ENCODE measurements at regions of chr17 and their contacts with region 1.

Region 1: DNA sequence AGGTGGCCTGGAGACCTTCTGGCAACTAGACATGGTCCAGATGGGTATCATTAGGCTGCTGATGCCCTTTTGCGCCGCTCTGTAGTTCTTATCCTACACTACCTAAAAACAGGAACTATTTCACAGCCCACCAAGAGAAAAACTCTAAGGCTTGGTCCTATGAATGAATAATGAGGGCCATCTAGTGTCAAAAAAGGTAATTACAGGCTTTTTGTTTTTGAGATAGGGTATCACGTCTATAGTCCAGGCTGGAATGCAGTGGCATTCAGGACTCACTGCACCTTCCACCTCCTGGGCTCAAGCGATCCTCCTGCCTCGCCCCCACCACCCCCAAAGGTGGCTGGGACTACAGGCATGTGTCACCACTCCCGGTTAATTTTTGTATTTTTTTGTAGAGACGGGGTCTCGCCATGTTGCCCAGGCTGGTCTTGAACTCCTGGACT is 20.9 kb downstream of the COIL start:
- DNase-seq: peak; percentile 42 to 71 (median 53)
- ATAC-seq: peak; percentile 93
- H3K4me3 ChIP-seq: no peak overlapping the region
- H3K27ac ChIP-seq: no peak overlapping the region
- H3K4me1 ChIP-seq: peaks cover 8% of the 10 kb centered on the region in 2 experiments; a peak in 3 of 5 replicates
- H3K27me3 ChIP-seq: no peaks in the 10 kb centered on the region
- CTCF ChIP-seq: peak; percentile 63 to 88 (median 72); a peak in 5 of 6 replicates
- EP300 ChIP-seq: no peak
- POLR2A ChIP-seq: no peak
- RAD21 ChIP-seq: peak; percentile 89 to 92

Region 2: DNA sequence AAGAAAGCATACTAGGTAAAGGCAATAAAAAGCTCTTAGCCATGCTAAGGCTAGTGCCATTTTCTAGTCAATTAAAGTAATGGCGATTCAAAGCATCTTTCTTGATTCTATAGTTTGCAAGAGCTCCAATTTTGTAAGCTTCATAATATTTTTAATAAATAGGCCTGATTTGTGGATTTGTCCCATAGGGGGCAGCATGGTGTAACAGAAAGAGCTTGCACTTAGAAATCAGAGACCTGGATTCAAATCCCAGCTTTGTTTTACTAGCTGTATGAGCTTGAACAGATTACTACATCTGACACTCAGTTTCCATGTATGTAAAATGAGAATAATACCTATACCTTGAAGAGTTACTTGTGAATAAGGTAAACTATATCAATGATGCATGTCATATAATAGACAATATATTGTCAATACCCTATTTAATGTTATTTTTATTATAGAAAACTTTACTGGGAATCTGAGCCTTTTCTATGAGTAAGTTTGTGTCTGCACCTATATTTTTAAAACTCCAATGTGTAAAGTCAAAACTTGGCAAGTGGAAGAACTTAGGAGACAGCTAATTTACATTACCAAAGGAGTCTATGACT is 440.0 kb before region 1 on chr17:
- CTCF ChIA-PET with region 1: no interaction called
- POLR2A ChIA-PET with region 1: no interaction called
- in situ Hi-C with region 1: no loop called
- intact Hi-C with region 1: loop called (anchors 10 kb)
- DNase-seq: peak; percentile 19 to 40 (median 22)
- ATAC-seq: no peak
- H3K4me3 ChIP-seq: no peak overlapping the region
- H3K27ac ChIP-seq: no peak overlapping the region
- H3K4me1 ChIP-seq: no peaks in the 10 kb centered on the region
- H3K27me3 ChIP-seq: no peaks in the 10 kb centered on the region
- CTCF ChIP-seq: peak; percentile 44 to 65 (median 55); a peak in 5 of 6 replicates
- EP300 ChIP-seq: no peak
- POLR2A ChIP-seq: no peak
- RAD21 ChIP-seq: peak; percentile 36 to 64; a peak in 3 of 4 replicates

Region 3: GRCh38 chr17:56592487-56593085 is 347.3 kb before region 1 on chr17:
- CTCF ChIA-PET with region 1: interaction called, 7 read pairs
- POLR2A ChIA-PET with region 1: no interaction called
- in situ Hi-C with region 1: no loop called
- intact Hi-C with region 1: loop called (anchors 10 kb)
- DNase-seq: peak; percentile 52 to 88 (median 82)
- ATAC-seq: peak; percentile 96
- H3K4me3 ChIP-seq: no peak overlapping the region
- H3K27ac ChIP-seq: no peak overlapping the region
- H3K4me1 ChIP-seq: peaks cover 0 to 22% of the 10 kb centered on the region in 2 experiments; a peak in 2 of 5 replicates
- H3K27me3 ChIP-seq: peaks cover 17 to 28% of the 10 kb centered on the region in 2 experiments
- CTCF ChIP-seq: peak; percentile 67 to 88 (median 76)
- EP300 ChIP-seq: no peak
- POLR2A ChIP-seq: no peak
- RAD21 ChIP-seq: peak; percentile 84 to 91

Region 4: GRCh38 chr17:56774650-56775049 is 165.3 kb before region 1 on chr17:
- CTCF ChIA-PET with region 1: no interaction called
- POLR2A ChIA-PET with region 1: no interaction called
- in situ Hi-C with region 1: no loop called
- intact Hi-C with region 1: no loop called
- DNase-seq: no peak
- ATAC-seq: no peak
- H3K4me3 ChIP-seq: no peak overlapping the region
- H3K27ac ChIP-seq: no peak overlapping the region
- H3K4me1 ChIP-seq: peaks cover 0 to 7% of the 10 kb centered on the region in 2 experiments; a peak in 2 of 5 replicates
- H3K27me3 ChIP-seq: peaks cover 10 to 21% of the 10 kb centered on the region in 2 experiments
- CTCF ChIP-seq: no peak
- EP300 ChIP-seq: no peak
- POLR2A ChIP-seq: no peak
- RAD21 ChIP-seq: no peak

Region 5: DNA sequence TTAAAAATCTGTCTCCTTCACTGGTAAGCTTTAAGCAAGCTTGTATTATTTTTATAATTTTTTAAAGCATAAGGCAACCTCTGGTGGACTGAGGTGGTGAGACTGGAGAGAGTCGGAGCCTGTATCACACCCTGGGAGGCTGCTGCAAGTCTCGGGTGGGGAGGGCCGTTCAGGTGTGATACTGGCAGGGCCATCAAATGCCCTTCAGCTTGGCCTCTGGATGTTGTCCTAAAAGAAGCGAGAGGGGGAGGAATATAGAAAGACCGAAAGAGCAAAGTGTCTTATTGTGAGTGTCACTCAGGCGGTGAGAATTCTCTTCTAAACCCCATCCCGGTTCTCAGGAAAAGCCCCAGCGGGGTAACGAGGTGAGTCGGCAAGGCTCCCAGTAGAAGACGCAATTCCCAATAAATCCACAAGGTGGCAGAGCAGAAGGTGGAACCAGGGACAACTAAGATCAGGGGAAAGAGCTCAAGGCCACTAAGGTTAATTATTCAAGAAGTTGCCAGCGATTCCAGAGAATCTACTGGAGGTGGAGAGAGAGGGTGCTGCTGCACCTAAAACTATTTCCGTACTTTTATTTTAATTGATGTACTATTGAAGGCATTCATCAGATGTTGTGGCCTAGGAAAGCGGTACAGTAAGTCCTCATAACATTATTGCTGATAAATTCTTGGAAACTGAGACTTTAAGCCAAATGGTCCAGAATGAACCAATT is 120.3 kb before region 1 on chr17:
- CTCF ChIA-PET with region 1: interaction called, 27 read pairs
- POLR2A ChIA-PET with region 1: interaction called, 4 read pairs
- in situ Hi-C with region 1: loop called (anchors 5 kb)
- intact Hi-C with region 1: loop called (anchors 1 kb)
- DNase-seq: peak; percentile 78 to 84 (median 80)
- ATAC-seq: peak; percentile 95
- H3K4me3 ChIP-seq: no peak overlapping the region
- H3K27ac ChIP-seq: no peak overlapping the region
- H3K4me1 ChIP-seq: no peaks in the 10 kb centered on the region; a peak in 1 of 5 replicates
- H3K27me3 ChIP-seq: peaks cover 3 to 4% of the 10 kb centered on the region in 2 experiments
- CTCF ChIP-seq: peak; percentile 74 to 81 (median 81)
- EP300 ChIP-seq: no peak
- POLR2A ChIP-seq: no peak
- RAD21 ChIP-seq: peak; percentile 74 to 83

Region 6: DNA sequence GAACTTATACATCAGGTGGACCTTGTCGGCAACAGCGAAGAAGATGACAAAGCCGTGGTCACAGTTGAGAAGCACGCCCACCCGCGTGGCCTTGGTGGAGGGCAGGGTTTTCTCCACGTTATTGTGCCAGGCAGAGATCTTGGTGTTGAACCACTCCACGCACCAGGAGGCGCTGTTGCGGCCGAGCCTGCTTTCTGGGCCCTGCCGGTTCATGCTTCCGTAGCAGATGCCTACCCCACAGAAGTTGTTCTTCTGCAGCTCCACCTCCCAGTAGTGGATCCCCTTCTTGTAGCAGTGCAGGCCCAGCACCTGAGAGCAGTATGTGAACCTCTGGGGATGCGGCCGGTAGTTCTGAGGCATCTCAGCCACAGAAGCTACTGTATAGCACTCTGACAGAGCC is 48.1 kb before region 1 on chr17:
- CTCF ChIA-PET with region 1: interaction called, 6 read pairs
- POLR2A ChIA-PET with region 1: interaction called, 3 read pairs
- in situ Hi-C with region 1: no loop called
- intact Hi-C with region 1: loop called (anchors 5 kb)
- DNase-seq: peak; percentile 34 to 49 (median 42)
- ATAC-seq: peak; percentile 73
- H3K4me3 ChIP-seq: no peak overlapping the region
- H3K27ac ChIP-seq: no peak overlapping the region
- H3K4me1 ChIP-seq: no peaks in the 10 kb centered on the region
- H3K27me3 ChIP-seq: no peaks in the 10 kb centered on the region
- CTCF ChIP-seq: peak; percentile 59 to 67 (median 63)
- EP300 ChIP-seq: no peak
- POLR2A ChIP-seq: no peak
- RAD21 ChIP-seq: peak in 1 of 2 experiments; percentile 38; a peak in 2 of 4 replicates

Region 7: DNA sequence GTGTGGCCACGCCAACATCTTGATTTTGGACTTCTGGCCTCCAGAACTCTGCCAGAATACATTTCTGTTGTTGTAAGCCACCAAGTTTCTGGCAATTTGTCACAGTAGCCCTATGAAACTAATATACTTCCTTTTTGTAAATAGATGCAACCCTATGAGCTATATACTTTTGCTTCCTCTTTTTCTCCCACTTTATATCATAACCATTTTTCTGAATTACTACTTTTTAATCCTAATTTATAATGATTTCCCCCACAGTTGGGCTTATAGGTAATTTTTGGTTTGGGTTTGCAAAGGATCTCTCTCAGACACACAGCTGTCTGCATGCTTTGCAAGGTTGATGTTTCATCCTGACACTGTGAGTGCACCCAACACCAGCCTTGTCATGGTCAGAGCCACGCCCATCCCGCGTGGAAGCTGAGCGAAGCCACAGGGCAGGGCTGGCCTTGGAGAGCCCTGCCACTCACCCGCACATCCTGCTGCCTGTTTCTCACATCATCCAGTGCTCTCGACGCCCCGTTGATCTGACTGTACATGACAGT is 31.9 kb before region 1 on chr17:
- CTCF ChIA-PET with region 1: interaction called, 4 read pairs
- POLR2A ChIA-PET with region 1: no interaction called
- in situ Hi-C with region 1: no loop called
- intact Hi-C with region 1: loop called (anchors 1 kb)
- DNase-seq: peak in 2 of 4 experiments; percentile 29 to 56
- ATAC-seq: no peak
- H3K4me3 ChIP-seq: no peak overlapping the region
- H3K27ac ChIP-seq: no peak overlapping the region
- H3K4me1 ChIP-seq: peaks cover 33 to 37% of the 10 kb centered on the region in 2 experiments
- H3K27me3 ChIP-seq: no peaks in the 10 kb centered on the region
- CTCF ChIP-seq: no peak
- EP300 ChIP-seq: no peak
- POLR2A ChIP-seq: no peak
- RAD21 ChIP-seq: no peak

Region 8: DNA sequence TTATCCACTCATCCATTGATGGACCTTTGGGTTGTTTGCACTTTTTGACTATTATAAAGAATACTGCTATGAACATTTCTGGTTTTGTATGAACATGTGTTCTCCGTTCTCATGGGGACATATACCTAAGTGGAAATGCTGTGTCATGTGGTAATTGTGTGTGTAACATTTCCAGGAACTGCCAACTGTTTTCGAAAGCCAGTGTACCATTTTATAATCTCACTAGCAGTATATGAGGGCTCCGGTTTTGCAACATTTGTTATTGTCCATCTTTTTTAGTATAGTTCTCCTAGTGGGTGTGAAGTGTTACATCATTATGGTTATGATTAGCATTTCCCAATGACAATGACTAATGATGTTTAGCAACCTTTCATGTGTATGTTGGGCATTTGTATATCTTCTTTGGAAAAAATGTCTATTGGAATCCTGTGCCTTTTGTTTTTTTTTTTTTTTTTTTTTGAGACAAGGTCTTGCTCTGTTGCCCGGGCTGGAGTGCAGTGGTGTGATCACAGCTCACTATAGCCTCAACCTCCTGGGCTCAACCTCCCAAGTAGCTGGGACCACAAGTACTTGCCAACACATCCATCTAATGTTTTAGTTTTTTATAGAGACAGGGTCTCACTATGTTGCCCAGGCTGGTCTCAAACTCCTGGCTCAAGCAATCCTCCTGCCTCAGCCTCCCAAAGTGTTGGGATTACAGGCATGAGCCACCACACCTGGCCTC is 20.8 kb before region 1 on chr17:
- CTCF ChIA-PET with region 1: no interaction called
- POLR2A ChIA-PET with region 1: no interaction called
- in situ Hi-C with region 1: no loop called
- intact Hi-C with region 1: no loop called
- DNase-seq: peak in 1 of 4 experiments; percentile 24
- ATAC-seq: no peak
- H3K4me3 ChIP-seq: no peak overlapping the region
- H3K27ac ChIP-seq: peak overlapping the region; percentile 27
- H3K4me1 ChIP-seq: peaks cover 13 to 18% of the 10 kb centered on the region in 2 experiments; a peak in 4 of 5 replicates
- H3K27me3 ChIP-seq: no peaks in the 10 kb centered on the region
- CTCF ChIP-seq: no peak
- EP300 ChIP-seq: no peak
- POLR2A ChIP-seq: no peak
- RAD21 ChIP-seq: no peak

Region 9: DNA sequence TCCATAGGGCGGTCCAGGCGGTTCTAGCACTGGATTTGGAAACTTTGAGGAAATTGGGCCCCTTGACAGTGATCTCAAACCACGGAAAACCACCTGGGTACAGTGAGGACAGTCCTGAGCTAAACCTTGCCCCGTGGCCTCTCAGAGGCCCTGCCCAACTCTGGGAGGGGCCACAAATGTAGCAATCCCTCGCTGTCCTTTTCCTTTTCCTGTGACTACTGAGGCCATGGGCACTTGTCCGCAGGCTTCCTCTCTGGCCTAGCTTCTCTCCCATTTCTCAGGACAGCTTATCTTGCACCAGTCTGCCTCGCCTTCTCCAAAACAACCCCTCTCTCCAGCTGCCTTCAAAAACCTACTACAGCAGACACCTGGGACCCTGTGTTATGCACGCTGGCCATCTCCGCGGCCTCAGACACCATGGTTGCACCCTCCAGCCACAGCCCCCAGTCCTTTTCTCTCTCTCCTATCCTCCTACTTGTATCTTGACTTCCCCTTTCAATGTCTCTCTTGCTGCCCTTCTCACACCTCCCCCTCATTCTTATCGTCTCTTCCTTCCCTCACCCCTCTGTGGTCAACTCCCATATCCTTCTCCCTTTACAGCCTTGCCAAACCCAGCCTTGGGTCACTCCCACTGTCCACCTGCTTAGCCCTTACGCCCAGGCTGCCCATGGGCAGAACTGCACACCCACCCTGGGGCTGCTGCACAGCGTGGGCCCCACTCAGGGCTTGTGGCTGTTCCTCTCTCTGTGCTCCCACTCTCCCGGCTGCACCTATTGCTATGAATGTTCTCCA is 45.6 kb after region 1 on chr17:
- CTCF ChIA-PET with region 1: no interaction called
- POLR2A ChIA-PET with region 1: no interaction called
- in situ Hi-C with region 1: no loop called
- intact Hi-C with region 1: no loop called
- DNase-seq: peak; percentile 79 to 90 (median 84)
- ATAC-seq: peak; percentile 91
- H3K4me3 ChIP-seq: no peak overlapping the region
- H3K27ac ChIP-seq: peak overlapping the region; percentile 68
- H3K4me1 ChIP-seq: peaks cover 29 to 45% of the 10 kb centered on the region in 2 experiments
- H3K27me3 ChIP-seq: no peaks in the 10 kb centered on the region
- CTCF ChIP-seq: no peak
- EP300 ChIP-seq: peak; percentile 69; the same call in 1 of the 2 replicates
- POLR2A ChIP-seq: peak; percentile 44; the same call in 1 of the 2 replicates
- RAD21 ChIP-seq: no peak

Measured in K562 (cell line).